ENCODE measurements at regions of chr5 and their contacts with region 1.

Region 1: GRCh38 chr5:95781101-95781583 is 41.4 kb downstream of the GLRX start:
- DNase-seq: peak; percentile 74
- CTCF ChIP-seq: peak; percentile 82

Region 2: DNA sequence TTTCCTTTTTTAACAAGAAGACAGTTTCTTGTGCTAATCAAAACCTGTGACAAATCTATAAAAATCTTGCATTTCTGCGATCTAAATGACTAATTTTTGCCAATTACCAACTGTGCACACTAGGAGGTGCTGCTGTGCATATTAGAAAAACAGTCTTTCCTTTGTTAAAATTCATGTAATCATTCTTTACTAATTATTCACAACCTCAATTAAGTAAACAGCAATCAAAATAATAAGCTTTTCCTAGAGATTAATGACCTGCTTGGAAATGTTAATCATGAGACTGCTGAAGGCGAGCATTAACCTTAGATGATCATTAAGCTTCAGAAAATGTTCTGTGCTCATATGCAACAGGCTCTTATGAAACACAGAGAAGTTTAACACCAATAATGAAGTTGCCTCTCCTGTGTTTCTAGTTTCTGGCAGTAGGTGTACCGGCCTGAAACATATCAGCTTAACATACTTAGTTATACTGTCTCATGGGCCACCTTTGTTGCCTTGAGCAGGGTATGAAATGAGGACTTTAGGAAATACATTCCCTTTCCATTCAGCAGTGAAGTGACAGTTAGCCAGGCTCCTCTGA is 116.8 kb before region 1 on chr5:
- CTCF ChIA-PET with region 1: interaction called, 16 read pairs
- POLR2A ChIA-PET with region 1: no interaction called
- DNase-seq: no peak
- CTCF ChIP-seq: peak; percentile 72

Region 3: GRCh38 chr5:95808686-95809413 is 27.7 kb after region 1 on chr5:
- CTCF ChIA-PET with region 1: interaction called, 61 read pairs
- POLR2A ChIA-PET with region 1: no interaction called
- DNase-seq: peak; percentile 88
- CTCF ChIP-seq: no peak

Region 4: GRCh38 chr5:95822542-95823181 is 41.5 kb after region 1 on chr5 and contains the start of gene GLRX:
- CTCF ChIA-PET with region 1: interaction called, 23 read pairs
- POLR2A ChIA-PET with region 1: no interaction called
- DNase-seq: peak; percentile 58
- CTCF ChIP-seq: no peak

Region 5: DNA sequence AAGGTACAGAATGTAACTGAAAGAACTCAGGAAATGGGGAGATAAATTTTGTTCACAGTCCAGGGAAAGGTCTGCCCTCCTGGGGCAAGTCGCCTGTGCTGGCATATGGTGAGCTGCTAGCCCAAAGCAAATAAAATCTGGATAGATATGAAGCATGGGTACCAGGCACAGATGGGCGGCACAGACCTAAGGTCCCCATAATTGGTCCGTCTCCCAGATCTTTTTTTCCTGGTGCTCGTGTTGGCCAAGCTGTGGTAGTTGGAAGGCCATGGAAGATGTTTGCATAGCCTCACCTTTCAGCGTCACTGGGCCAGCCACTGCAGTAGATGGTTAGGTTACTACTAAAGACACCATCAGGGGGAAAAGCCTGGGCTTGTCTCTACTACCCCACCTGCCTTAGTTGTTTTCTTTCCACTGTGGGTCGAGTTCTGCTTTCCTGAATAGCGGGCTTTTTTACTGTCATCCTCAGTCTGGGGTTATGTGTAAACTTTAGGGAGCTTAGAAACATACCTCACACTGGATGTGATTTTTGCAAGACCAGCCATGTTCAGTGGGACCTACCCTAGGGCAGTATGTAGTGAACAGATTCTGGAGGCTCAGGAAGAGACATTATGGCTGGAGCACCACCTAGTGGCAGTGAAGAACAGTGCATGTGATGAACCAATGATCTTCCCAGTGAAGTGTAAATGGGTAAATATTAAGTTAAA is 65.6 kb after region 1 on chr5:
- CTCF ChIA-PET with region 1: interaction called, 561 read pairs
- POLR2A ChIA-PET with region 1: no interaction called
- DNase-seq: peak; percentile 75
- CTCF ChIP-seq: peak; percentile 88

Region 6: DNA sequence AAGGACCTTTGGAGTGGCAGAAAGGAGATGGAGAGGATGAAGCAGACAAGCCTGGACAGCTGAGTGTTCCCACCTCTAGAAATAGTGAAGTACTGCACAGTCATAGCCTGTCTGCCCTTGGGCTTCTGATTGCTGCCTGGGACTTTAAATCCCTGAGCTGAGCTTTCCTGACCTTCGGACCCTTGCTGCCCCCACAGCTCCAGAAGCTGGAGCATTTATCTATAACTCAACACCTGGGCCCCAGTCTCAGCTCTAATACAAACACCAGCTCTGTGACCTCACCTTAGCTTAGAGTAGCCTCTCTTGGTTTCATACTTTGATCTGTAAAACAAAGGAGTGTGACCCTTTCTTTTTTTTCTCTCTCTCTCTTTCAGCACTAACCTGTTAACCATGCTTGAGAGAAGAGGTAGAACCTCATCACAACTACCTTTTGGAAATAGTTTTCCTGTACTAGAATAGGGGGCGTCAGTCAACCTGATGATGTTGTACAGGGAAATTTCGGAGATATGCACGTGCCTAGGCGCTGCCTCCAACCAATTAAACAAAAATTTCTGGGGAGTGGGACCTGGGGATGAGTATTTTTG is 205.9 kb after region 1 on chr5:
- CTCF ChIA-PET with region 1: no interaction called
- POLR2A ChIA-PET with region 1: no interaction called
- DNase-seq: no peak
- CTCF ChIP-seq: no peak